HAP-1 (cell line): ENCODE measurements at regions of chr2 and their contacts with region 1.

Region 1: GRCh38 chr2:232455426-232456255 is at the start of gene ALPI:
- DNase-seq: no peak
- H3K4me3 ChIP-seq: no peak within 1 kb of the TSS
- H3K4me1 ChIP-seq: no peaks in the 10 kb centered on the region
- H3K27me3 ChIP-seq: no peaks in the 10 kb centered on the region; the same call in 1 of the 2 replicates

Region 2: DNA sequence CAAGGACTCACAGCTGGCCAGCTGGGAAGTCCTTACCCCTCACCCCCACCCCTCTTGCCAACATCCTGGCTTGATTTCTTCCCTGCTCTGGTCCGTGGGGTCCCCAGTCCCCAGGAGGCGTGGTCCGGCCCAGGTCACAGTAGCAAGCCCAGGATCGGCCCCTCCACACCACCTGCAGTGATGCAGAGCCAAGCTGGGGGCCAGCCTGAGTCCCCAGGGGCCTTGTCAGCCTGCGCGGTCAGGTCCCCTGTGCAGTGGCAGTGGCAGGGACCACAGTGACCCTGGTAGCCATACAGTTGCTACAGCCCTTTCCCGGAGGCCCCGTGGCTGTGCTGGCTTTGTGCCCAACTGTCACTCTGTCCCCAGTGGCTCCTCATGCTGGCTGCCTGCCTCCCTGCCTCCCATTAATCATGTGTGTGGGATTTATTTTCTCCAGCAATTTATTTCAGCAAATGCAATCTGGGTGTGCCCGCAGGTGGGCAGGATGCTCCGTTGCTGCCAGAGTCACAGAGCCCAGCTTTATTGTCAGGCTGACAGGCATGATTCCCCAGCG is 55.8 kb after region 1 on chr2:
- in situ Hi-C with region 1: loop called (anchors 10 kb)
- DNase-seq: no peak
- H3K4me3 ChIP-seq: no peak overlapping the region
- H3K4me1 ChIP-seq: no peaks in the 10 kb centered on the region
- H3K27me3 ChIP-seq: no peaks in the 10 kb centered on the region

Region 3: GRCh38 chr2:233643128-233643527 is 1187.5 kb after region 1 on chr2:
- in situ Hi-C with region 1: no loop called
- DNase-seq: peak in 1 of 2 experiments; percentile 34
- H3K4me3 ChIP-seq: no peak overlapping the region
- H3K4me1 ChIP-seq: no peaks in the 10 kb centered on the region
- H3K27me3 ChIP-seq: no peaks in the 10 kb centered on the region